ENCODE measurements at regions of chr11 and their contacts with region 1.

Region 1: DNA sequence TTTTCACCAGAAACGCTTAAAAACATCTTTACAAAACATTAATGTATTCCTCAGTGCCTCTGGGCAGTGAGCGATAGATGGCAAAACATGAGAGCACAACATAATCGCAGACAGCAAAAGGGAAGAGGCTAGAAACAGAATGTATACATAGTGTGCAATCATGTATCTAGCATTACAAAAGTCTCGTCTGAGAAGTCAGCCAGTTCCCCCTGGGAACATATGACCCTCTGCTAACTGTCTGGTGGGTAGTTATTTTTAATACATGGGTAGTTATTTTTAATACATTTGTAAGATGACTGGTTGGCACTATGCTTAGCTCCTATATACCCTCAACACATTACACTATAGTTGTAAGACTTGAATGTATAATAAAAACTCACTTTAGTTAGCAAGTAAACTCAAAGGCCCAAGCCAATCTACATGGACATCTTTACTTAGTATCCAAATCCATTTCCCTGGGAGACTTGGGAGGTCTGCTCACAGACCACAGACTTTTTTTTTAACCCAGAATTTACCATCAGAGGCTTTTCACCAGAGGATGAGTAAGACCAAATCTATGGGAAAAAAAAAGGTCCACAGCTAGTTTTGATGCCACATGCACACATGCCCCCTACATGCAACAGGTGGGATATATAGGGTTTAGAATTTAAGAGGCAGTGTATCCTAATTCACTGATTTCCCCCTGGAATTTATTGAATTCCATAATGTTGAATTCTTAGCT is 71.7 kb downstream of the AMBRA1 start:
- DNase-seq: no peak
- ATAC-seq: peak in 3 of 4 donors; percentile 49 to 82 (median 77)
- H3K4me3 ChIP-seq: no peak overlapping the region
- H3K27ac ChIP-seq: no peak overlapping the region
- H3K4me1 ChIP-seq: peaks cover 30% of the 10 kb centered on the region
- H3K27me3 ChIP-seq: no peaks in the 10 kb centered on the region
- CTCF ChIP-seq: no peak

Region 2: DNA sequence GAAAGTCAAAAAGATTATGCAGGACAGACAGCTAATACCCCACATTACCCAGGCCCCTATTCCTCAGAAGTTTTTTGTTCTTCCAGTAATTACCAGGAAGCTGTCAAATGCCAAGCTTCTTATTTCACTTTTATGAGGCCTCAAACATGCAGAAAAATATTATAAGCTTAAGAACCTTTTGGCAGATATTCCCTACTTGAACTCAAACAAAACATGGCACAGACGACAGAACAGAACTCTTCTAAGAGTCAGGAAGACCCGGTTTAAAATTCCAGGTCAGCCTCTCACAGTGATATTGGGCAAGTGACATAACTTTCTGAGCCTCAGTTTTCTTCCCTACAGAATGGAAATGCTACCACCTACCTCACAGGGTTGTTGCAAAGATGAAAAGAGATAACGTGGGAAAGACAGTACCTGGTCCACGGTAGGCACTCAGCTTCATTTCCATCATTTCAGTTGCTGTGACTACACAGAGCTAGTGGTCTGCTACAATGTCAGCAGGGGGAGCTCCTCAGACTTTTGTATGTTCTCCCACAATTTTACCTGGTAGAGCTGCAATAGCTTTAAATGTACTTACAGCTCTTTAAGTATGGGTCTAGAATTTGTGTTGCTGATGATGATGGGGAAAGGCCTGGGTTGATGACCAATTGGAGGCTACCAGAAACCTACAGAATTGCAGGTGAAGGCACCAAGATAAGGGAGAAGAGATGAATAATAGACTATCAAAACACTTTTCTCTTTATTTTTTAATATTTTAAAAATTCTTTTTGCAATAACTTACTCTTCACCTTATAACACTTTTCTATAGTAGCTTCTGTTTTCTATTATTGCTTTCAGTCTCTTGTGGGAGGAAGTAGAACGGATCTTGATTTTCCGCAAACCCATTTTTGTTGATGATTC is 32.2 kb before region 1 on chr11:
- intact Hi-C with region 1: loop called in 1 of 2 experiments (anchors 5 kb)
- DNase-seq: no peak
- ATAC-seq: peak in 1 of 4 donors; percentile 59
- H3K4me3 ChIP-seq: no peak overlapping the region
- H3K27ac ChIP-seq: no peak overlapping the region
- H3K4me1 ChIP-seq: peaks cover 6% of the 10 kb centered on the region
- H3K27me3 ChIP-seq: no peaks in the 10 kb centered on the region
- CTCF ChIP-seq: peak; percentile 42